Heart left ventricle (tissue), 16 donors: ENCODE measurements at regions of chr6 and their contacts with region 1.

Region 1: DNA sequence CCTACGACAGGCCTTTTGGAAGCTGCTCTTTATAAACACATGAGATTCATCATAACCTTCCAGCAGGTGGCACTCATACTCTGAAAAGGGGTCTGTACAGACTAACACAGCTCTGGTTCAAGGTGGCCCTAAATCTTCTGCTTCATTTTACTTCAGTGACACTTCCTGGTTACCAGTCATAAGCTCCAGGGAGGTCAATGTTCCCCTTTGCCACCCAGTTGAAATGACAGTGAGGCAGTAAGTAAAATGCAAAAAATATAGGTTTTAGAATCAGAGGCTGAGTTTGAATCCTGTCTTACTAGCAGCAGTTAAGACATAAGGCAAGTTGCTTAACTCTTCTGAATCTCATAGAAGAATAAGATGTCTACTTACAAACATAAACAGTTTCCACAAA is 132.8 kb downstream of the CDK19 start:
- DNase-seq: peak in 3 of 5 donors; percentile 47 to 69 (median 66)
- ATAC-seq: peak; percentile 92 to 98 (median 96)
- H3K4me3 ChIP-seq: no peak overlapping the region
- H3K27ac ChIP-seq: peak overlapping the region in 9 of 12 donors; percentile 6 to 65 (median 41)
- H3K4me1 ChIP-seq: peaks cover 0 to 25% (median 10%) of the 10 kb centered on the region in 12 donors
- H3K27me3 ChIP-seq: no peaks in the 10 kb centered on the region
- CTCF ChIP-seq: peak; percentile 53 to 85 (median 73)
- POLR2A ChIP-seq: no peak

Region 2: DNA sequence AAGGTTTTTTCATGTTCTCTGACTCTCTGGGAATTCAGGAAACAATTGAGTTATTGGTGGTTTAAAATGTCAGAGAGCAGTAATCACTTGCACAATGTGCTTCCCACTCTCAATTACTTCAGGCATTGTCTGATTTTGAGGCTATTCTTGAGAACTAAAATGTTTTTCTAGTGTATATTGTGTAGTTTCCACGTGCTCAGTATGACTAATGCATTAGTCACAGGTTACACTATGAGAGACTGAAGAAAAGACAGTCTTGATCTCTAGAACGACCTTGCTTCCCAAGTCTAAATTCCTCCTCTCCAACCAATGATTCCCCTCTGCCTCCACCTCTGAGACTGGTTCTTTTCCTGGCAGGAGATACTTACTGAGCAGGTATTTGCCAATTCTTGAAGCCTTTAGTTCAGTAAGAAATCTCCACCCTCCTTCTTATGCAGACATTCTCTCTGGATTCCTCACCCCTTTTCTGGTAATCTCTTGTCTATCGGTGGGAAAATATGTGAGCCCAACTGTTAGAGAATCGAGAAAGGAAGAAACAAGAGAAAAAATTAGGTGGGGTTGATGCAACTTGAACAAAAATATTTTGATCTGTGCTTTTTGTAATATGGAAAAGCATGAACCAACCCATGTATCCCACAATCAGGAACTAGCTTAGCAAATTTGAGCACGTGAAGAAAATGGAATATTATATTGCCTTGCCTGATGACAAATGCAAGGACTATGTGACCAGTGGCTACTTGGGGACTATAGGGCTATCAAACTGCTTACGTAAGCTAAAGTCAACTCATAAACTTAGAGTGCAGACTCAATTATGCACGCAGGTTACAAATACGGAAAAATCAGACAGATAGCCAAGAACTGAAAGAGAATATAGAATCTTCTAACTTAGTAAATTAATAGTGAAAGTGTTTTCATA is 145.0 kb before region 1 on chr6:
- intact Hi-C with region 1: loop called in 4 of 10 experiments (anchors 5 to 10 kb)
- DNase-seq: no peak
- ATAC-seq: peak in 3 of 4 donors; percentile 46 to 69 (median 68)
- H3K4me3 ChIP-seq: no peak overlapping the region
- H3K27ac ChIP-seq: peak overlapping the region in 8 of 12 donors; percentile 1 to 60 (median 38)
- H3K4me1 ChIP-seq: peaks cover 0 to 14% (median 3%) of the 10 kb centered on the region in 12 donors
- H3K27me3 ChIP-seq: no peaks in the 10 kb centered on the region
- CTCF ChIP-seq: no peak
- POLR2A ChIP-seq: no peak

Region 3: GRCh38 chr6:110882271-110882613 is 199.8 kb after region 1 on chr6:
- intact Hi-C with region 1: loop called in 9 of 10 experiments (anchors 2 to 5 kb)
- DNase-seq: no peak
- ATAC-seq: no peak
- H3K4me3 ChIP-seq: peak overlapping the region in 2 of 12 donors; percentile 11 to 18
- H3K27ac ChIP-seq: peak overlapping the region in 10 of 12 donors; percentile 4 to 65 (median 51)
- H3K4me1 ChIP-seq: peaks cover 2 to 96% (median 68%) of the 10 kb centered on the region in 12 donors
- H3K27me3 ChIP-seq: no peaks in the 10 kb centered on the region
- CTCF ChIP-seq: no peak
- POLR2A ChIP-seq: no peak

Region 4: DNA sequence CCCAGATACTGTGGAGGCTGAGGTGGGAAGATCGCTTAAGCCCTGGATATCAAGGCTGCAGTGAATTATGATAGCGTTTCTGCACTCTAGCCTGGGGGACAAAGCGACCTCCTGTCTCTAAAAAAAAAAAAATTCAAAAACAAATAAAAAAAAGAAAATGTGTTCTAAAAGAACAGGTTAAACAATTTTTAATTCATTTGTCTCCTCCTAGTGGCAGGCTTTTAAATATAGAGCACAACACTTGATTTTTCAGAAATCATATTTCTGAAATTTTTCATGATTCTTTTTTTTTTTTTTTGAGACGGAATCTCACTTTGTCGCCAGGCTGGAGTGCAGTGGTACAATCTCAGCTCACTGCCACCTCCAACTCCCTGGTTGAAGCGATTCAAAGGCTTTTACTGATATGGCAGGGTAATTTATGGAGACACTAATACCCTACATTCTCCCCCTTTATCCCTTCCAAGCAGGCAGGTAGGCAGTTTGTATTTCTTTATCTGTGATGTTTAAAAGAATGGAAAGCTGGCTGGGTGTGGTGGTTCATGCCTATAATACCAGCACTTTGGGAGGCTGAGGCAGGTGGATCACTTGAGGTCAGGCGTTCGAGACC is 267.3 kb after region 1 on chr6:
- intact Hi-C with region 1: loop called (anchors 1 to 5 kb)
- DNase-seq: no peak
- ATAC-seq: no peak
- H3K4me3 ChIP-seq: no peak overlapping the region
- H3K27ac ChIP-seq: no peak overlapping the region
- H3K4me1 ChIP-seq: peaks cover 0 to 13% (median 0%) of the 10 kb centered on the region in 12 donors
- H3K27me3 ChIP-seq: no peaks in the 10 kb centered on the region
- CTCF ChIP-seq: peak; percentile 36 to 67 (median 53)
- POLR2A ChIP-seq: no peak